Activated naive CD4-positive, alpha-beta T cell treated with anti-CD3 and anti-CD28 coated beads for 36 hours (primary cell): ENCODE measurements at regions of chr19 and their contacts with region 1.

Region 1: GRCh38 chr19:15418588-15419412 is at the start of gene AKAP8L:
- DNase-seq: peak; percentile 99
- H3K4me3 Mint-ChIP-seq: peak within 1 kb of the TSS; percentile 99
- H3K27ac Mint-ChIP-seq: peak within 1 kb of the TSS; percentile 92
- H3K4me1 Mint-ChIP-seq: peaks cover 38% of the 10 kb centered on the region
- H3K27me3 Mint-ChIP-seq: no peaks in the 10 kb centered on the region
- total RNA-seq, gene AKAP8L: 127 to 140 TPM

Region 2: DNA sequence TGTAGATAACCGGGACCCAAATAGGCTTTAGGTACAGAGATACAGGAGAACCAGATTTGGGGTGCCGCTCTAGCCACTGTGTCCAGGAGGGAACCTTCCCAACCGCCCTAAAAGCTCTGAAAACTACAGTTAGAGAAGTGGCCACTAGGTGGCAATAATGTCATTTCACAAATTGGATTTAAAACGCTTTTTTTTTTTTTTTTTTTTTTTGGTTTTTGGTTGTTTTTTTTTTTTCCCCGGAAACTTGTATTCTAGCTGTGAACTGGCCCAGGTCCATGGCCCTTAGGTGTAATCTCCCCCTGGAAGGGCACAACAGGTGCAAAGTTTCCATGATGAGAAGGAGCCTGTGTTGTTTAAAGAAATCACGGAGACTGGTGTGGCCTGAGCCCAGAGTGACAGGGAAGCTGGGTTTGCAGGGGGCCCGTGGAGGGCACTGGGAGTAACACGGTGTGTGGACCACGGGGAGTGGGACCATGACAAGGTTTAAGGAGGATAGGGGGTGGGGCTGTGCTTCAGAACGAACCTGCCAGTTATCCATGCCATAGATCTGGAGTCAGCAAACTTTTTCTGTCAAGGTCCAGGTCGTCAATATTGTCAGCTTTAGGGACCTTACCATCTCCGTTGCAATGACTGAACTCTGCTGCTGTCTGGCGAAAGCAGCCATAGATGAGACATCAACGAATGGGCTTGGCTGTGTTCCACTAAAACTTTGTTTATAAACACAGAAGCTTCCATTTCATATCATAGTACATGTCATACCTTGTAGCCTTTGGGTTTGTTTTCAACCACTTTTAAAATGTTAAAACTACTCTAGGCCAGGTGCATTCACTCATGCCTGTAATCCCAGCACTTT is 326.7 kb before region 1 on chr19:
- CTCF ChIA-PET with region 1: interaction called, 4 read pairs
- intact Hi-C with region 1: loop called (anchors 2 kb)
- DNase-seq: peak; percentile 61
- H3K4me3 Mint-ChIP-seq: no peak overlapping the region
- H3K27ac Mint-ChIP-seq: no peak overlapping the region
- H3K4me1 Mint-ChIP-seq: peaks cover 2% of the 10 kb centered on the region
- H3K27me3 Mint-ChIP-seq: peaks cover 8% of the 10 kb centered on the region

Region 3: DNA sequence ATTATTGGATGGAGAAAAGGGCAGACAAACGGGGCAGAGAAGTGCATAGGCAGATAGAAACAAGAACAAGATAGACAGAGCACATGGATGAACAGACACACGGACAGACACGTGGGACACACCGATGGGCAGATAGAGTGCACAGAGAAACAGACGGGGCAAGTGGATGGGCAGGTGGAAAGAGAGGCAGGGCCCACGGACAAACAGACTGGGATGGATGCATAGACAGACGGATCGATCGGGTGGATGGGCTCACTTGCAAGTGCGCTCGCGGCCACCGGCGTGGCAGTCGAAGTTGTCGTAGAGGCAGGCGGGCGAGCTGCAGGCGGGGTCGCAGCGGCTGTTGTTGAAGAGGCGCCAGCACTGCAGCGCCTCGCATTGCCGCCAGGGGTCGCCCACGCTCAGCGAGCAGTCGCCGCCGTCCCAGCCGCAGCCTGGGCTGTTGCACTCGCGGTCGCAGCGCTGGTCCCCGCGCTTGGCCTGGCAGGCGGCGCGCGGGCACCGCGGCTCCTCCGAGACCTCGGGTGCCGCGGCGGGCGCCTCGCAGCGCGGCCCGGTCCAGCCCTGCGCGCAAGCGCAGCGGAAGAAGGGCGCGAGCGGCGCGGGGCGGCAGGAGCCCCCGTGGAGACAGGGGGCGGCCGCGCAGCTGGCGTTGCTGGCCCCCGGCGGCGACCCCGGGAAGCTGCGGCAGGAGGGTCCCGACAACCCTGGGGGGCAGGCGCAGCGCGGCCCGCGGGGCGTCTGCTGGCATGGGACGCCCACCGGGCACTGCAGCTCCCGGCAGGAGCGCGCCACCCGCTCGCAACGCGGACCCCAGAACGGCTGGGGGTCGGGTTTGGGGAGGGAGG is 241.3 kb before region 1 on chr19:
- CTCF ChIA-PET with region 1: no interaction called
- intact Hi-C with region 1: loop called (anchors 1 kb)
- DNase-seq: peak; percentile 84
- H3K4me3 Mint-ChIP-seq: peak overlapping the region; percentile 24
- H3K27ac Mint-ChIP-seq: no peak overlapping the region
- H3K4me1 Mint-ChIP-seq: peaks cover 2% of the 10 kb centered on the region
- H3K27me3 Mint-ChIP-seq: peaks cover 3% of the 10 kb centered on the region

Region 4: GRCh38 chr19:15379083-15379995 is 39.5 kb before region 1 on chr19 and contains the start of gene AKAP8:
- CTCF ChIA-PET with region 1: interaction called, 21 read pairs
- intact Hi-C with region 1: loop called (anchors 1 kb)
- DNase-seq: peak; percentile 98
- H3K4me3 Mint-ChIP-seq: peak within 1 kb of the TSS; percentile 93
- H3K27ac Mint-ChIP-seq: peak within 1 kb of the TSS; percentile 96
- H3K4me1 Mint-ChIP-seq: peaks cover 48% of the 10 kb centered on the region
- H3K27me3 Mint-ChIP-seq: no peaks in the 10 kb centered on the region
- total RNA-seq, gene AKAP8: 27.1 to 30.3 TPM

Region 5: DNA sequence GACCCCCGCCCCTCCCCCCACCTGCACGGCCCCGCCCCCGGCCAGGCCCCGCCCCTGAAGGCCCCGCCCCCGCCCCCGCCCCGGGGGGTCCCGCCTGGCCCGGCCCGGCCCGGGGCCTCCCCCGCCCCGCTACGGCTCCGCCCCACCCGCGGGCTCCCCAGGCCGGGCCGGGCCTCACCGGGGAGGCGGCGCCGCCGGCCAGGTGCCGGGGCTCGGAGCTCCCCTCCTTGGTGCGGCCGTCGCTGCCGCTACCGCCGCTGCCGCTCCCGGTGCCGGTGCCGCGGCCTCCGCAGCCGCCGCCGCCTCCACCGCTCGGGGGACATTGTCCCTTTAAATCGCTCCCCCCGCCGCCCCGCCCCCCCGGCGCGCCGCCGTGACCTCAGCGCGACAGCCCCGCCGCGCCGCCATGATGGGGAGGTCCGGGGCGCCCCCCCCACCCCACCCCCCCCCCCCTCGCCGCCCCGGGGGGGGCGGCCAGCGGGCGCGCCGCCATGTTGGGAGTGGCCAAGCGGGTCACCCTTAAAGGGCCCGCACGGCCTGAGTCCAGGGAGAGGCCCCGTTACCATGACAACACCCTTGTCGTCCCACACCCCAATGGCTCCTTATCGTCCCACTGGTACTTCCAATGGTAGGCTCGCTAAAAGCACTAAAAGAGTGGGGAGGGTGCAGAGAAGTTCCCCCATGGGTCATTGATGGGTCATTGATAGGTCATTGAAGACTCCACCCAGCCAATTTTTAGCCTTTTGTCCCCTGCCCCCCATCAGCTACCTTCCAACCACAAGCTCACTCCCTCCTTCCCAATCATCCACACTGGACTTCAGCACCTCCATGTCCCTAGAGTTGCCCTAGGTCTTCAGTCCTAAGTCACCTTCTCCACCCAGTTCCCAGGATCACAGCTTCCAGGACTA is 31.1 kb after region 1 on chr19 and contains the start of gene WIZ:
- CTCF ChIA-PET with region 1: interaction called, 8 read pairs
- intact Hi-C with region 1: loop called (anchors 1 kb)
- DNase-seq: peak; percentile 80
- H3K4me3 Mint-ChIP-seq: peak within 1 kb of the TSS; percentile 75
- H3K27ac Mint-ChIP-seq: peak within 1 kb of the TSS; percentile 74
- H3K4me1 Mint-ChIP-seq: peaks cover 15% of the 10 kb centered on the region
- H3K27me3 Mint-ChIP-seq: no peaks in the 10 kb centered on the region
- total RNA-seq, gene WIZ: 16.5 to 16.7 TPM

Region 6: DNA sequence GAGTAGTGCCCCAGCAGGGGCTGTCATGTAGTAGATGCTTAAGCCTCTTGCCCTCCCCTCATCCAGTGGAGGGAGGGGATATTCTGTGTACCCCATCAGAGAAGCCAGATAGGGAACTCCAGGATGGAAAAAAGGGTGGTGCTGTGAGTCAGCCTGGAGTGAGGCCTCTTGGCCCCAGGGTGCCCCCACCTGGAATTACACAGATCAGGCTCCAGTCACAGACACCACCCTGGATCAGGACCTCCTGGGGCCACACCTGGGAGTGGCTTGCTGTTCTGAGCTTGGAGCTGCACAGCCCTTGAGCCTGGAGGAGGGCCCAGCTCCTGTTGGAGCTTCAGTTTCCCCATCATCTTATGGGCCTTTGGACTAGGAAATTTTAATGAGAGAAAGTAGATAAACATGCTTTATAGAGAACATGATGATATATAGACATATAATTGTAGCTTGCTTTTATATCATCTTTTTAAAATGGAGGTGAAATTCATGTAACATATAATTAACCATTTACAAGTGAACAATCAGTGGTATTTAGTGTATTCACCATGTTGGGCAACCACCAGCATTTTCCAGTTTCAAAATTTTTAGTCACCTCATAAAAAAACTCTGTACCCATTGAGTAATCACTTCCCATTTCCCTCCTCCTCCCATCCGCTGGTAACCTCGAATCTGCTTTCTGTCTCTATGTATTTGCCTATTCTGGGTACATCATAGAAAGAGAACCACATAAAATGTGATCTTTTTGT is 114.2 kb after region 1 on chr19:
- CTCF ChIA-PET with region 1: no interaction called
- intact Hi-C with region 1: loop called (anchors 1 kb)
- DNase-seq: peak; percentile 61
- H3K4me3 Mint-ChIP-seq: no peak overlapping the region
- H3K27ac Mint-ChIP-seq: peak overlapping the region; percentile 54
- H3K4me1 Mint-ChIP-seq: peaks cover 34% of the 10 kb centered on the region
- H3K27me3 Mint-ChIP-seq: no peaks in the 10 kb centered on the region